ENCODE measurements at regions of chr11 and their contacts with region 1.

Region 1: GRCh38 chr11:86632499-86633269 is 39.7 kb downstream of the ME3 start:
- DNase-seq: no peak
- ATAC-seq: peak; percentile 11

Region 2: GRCh38 chr11:86408845-86409244 is 223.8 kb before region 1 on chr11:
- intact Hi-C with region 1: no loop called
- DNase-seq: no peak
- ATAC-seq: no peak

Region 3: GRCh38 chr11:86551286-86552092 is 81.2 kb before region 1 on chr11:
- intact Hi-C with region 1: no loop called
- DNase-seq: no peak
- ATAC-seq: peak; percentile 51

Region 4: DNA sequence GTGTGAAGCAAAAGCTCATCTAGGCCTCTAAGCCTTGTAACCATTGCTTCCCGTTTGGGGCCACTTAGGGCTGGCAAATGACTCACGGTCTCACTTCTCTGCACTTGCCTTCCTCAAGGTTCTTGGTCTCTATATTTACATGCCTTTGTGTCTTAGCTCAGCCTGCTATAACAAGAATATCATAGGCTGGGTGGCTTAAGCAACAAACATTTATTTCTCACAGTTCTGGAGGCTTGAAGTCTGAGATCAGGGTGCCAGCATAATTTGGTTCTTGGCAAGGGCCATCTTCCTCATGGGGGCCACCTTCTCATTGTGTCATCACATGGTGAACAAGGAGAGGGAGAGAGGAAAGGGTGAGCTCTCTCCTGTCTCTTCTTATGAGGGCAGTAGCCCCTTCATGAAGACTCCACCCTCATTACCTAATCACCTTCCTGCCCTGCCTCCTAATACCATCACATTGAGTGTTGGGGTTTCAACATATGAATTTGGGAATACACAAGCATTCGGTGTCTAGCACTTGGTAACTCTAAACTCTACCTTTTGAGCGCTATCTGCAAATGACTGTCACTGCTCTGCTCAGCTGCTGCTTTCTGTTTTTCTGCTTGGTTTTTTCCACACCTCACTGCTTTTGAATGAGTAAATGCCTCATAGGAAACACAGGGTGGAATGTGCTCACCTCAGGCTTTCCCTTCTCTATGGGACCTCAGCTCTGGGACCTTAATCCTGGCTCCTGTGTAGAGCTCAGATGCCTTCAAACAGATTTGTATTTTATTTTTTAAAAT is 55.9 kb after region 1 on chr11:
- intact Hi-C with region 1: loop called (anchors 10 kb)
- DNase-seq: no peak
- ATAC-seq: peak; percentile 41